RWPE1 (cell line): ENCODE measurements at regions of chr6 and their contacts with region 1.

Region 1: GRCh38 chr6:38248500-38249234 is 391.1 kb downstream of the BTBD9 start:
- DNase-seq: peak; percentile 73
- H3K27ac ChIP-seq: peak overlapping the region; percentile 58; the same call in 1 of the 2 replicates
- CTCF ChIP-seq: no peak

Region 2: DNA sequence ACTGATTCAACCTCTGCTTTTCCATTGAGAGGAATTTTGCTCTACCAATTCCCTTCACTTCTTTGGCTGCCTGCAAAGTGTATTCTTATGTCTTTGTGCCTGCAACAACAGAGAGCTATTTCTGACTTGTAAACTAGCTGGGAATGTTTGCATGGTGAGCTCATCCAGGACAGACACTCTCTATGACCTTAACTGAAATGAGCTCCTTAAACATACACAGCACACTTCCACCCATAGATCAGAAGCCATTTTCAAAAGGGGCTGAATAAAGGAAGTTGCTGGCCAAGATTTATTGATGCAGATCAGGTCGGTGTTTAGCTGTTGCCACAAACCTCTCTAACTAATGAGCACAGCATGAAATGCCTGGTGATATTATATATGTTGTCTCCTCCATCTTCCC is 13.4 kb after region 1 on chr6:
- CTCF ChIA-PET with region 1: interaction called, 10 read pairs
- POLR2A ChIA-PET with region 1: interaction called, 5 read pairs
- DNase-seq: peak; percentile 58
- H3K27ac ChIP-seq: no peak overlapping the region
- CTCF ChIP-seq: no peak